ENCODE measurements at regions of chr17 and their contacts with region 1.

Region 1: GRCh38 chr17:77331301-77331864 is 190.6 kb downstream of the SEC14L1 start:
- DNase-seq: peak; percentile 62 to 99
- H3K4me3 ChIP-seq: peak overlapping the region in 1 of 4 experiments; percentile 39; a peak in 2 of 8 replicates
- H3K27ac ChIP-seq: no peak overlapping the region
- H3K4me1 ChIP-seq: peaks cover 0 to 9% (median under 1%) of the 10 kb centered on the region in 4 experiments; a peak in 3 of 7 replicates
- H3K27me3 ChIP-seq: no peaks in the 10 kb centered on the region
- CTCF ChIP-seq: peak; percentile 90 to 94 (median 92)
- EP300 ChIP-seq: no peak
- POLR2A ChIP-seq: no peak
- RAD21 ChIP-seq: peak; percentile 97

Region 2: DNA sequence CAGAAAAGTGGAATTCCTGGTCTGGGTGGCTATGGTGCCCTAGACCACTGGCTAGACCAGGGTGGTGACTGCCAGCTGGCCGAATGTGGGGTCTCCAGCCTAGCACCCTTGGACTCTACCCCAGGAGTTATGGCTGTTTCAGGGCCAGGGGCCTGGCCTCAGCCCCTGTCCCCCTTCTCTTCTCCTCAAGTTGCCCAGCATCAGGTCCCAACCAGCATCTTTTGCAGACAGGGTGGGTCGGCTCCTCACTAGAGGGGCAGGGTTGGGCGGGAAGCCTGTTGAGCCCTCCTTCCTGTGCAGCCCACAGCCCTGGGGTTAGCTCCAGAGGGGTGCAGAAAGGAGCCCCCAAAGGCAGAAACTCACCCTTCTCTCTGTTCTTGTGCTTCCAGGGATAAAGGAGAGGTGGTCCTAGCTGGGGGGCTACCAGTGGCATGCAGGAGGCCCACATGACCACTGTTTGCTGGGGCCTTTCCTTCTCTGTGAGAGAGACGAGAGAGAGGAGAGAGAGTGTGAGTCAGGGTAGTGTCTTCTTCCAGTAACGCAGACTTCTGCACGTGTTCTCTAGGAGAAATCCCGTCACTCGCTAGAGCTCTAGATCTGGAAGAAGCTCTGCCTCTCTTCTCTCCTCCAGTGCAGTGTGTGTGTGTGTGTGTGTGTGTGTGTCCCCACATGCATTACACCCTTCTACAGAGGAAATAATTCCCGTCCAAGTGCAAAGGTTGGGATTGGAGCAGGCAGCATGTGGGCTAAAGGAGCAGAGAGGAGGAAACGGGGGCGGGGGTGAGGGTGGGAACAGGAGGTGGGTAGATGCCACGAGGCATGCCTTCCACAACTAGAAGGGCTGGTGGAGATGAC is 18.8 kb after region 1 on chr17:
- CTCF ChIA-PET with region 1: interaction called, 15 read pairs
- POLR2A ChIA-PET with region 1: interaction called, 3 read pairs
- DNase-seq: no peak
- H3K4me3 ChIP-seq: no peak overlapping the region
- H3K27ac ChIP-seq: no peak overlapping the region
- H3K4me1 ChIP-seq: peaks cover 0 to 13% (median 6%) of the 10 kb centered on the region in 4 experiments; a peak in 6 of 7 replicates
- H3K27me3 ChIP-seq: no peaks in the 10 kb centered on the region
- CTCF ChIP-seq: no peak
- EP300 ChIP-seq: no peak
- POLR2A ChIP-seq: no peak
- RAD21 ChIP-seq: no peak

Region 3: DNA sequence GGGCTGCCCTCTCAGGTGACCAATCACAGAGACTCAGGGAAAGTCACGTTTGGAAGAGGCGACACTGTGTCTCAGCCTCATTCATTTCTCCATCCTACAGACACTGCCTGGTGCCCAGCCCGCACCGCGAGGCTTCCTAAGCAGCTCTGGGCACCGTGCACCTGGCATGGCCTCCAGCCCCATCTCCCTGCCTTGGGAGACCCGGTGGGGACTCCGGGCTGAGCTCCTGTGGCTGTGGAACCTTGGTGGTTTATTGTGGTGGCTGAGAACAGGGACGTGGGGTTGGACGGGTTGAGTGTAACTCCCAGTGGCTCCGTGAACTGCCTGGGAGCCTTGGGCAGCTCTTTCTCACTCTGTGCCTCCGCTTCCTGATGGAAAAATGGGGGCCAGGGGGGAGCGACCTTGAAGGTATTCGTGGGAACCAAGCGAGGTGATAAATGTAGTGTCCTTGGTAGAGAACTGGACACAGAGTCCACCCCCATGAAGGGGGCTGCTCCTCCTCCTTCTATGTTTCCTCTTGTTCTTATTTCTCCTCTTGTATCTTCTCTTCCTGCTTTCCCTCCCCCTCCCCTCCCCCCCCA is 24.8 kb after region 1 on chr17:
- CTCF ChIA-PET with region 1: interaction called, 11 read pairs
- POLR2A ChIA-PET with region 1: no interaction called
- DNase-seq: no peak
- H3K4me3 ChIP-seq: no peak overlapping the region
- H3K27ac ChIP-seq: no peak overlapping the region; the same call in 1 of the 2 replicates
- H3K4me1 ChIP-seq: peaks cover 0 to 8% (median 2%) of the 10 kb centered on the region in 4 experiments; a peak in 5 of 7 replicates
- H3K27me3 ChIP-seq: no peaks in the 10 kb centered on the region
- CTCF ChIP-seq: no peak
- EP300 ChIP-seq: no peak
- POLR2A ChIP-seq: no peak
- RAD21 ChIP-seq: no peak